Activated T-helper 1 cell treated with anti-CD3 and anti-CD28 coated beads, Interleukin-12 subunit alpha, Interleukin-12 subunit beta, Interleukin-2, Interleukin-4 antibody, amounts not matched to agents 30 ng/mL and 10 ng/mL and 1 ng/mL, durations not matched to agents 14 hours and 24 hours and 36 hours (primary cell): ENCODE measurements at regions of chr1 and their contacts with region 1.

Region 1: DNA sequence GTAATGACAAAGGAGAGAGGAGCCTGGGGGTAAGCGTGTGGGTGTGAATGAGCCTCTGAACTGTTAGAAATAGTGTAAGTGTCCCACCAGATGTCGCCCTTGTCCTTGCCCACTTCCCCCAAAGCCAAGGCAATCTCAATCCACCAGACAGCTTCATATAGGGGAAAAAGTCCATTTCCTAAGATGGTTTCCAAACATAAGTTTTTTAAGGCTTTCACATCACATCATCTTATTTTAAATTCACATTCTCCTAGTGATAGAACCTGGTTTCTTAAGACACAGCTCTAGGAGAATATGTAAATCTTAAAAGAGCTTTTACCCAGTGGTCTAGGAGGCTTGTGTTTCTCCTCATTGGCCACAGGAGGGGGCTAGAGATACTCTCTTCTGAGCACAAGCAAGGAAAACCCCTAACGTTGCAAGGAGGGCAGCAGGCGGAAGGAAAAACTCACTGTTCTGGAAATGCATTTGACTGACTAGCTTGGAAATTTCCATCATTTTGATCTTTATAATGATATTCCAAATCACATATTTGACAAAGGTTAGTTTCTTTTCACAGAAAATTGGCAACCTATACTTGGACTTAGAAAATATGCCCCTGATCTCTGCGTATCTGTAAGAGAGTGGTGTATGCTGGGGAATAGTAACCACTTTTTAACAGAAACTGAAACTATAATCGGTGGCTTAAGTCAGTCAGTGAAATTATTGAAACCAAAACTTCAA is 51.9 kb upstream of the LPAR3 start:
- DNase-seq: peak; percentile 77
- H3K4me3 Mint-ChIP-seq: peak overlapping the region; percentile 81
- H3K27ac Mint-ChIP-seq: peak overlapping the region; percentile 91
- H3K4me1 Mint-ChIP-seq: peaks cover 39% of the 10 kb centered on the region
- H3K27me3 Mint-ChIP-seq: no peaks in the 10 kb centered on the region

Region 2: DNA sequence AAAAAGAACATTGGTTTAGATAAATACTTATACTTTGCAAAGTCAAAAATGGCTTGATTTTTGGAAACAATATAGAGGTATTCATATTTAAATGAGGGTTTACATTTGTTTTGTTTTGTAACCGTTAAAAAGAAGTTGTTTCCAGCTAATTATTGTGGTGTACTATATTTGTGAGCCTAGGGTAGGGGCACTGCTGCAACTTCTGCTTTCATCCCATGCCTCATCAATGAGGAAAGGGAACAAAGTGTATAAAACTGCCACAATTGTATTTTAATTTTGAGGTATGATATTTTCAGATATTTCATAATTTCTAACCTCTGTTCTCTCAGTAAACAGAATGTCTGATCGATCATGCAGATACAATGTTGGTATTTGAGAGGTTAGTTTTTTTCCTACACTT is 708.7 kb before region 1 on chr1:
- intact Hi-C with region 1: no loop called
- DNase-seq: no peak
- H3K4me3 Mint-ChIP-seq: no peak overlapping the region
- H3K27ac Mint-ChIP-seq: no peak overlapping the region
- H3K4me1 Mint-ChIP-seq: no peaks in the 10 kb centered on the region
- H3K27me3 Mint-ChIP-seq: no peaks in the 10 kb centered on the region

Region 3: DNA sequence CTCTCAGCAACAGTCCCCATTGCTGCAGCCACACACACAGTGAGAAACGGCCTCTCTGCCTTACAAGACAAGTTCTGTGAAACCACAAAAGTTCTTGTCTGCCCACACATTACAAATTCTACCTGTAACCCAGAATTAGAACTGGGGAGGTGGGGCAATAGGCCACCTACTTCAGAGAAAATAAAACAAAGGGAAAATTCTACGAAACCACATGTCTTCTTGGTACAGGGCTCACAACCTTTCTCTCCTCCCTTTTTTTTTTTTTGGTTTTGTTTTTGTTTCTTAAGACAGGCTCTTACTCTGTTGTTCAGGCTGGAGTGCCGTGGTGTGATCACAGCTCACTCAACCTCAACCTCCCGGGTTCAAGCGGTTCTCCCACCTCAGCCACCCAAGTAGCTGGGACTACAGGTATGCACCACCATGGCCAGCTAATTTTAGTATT is 82.1 kb before region 1 on chr1:
- intact Hi-C with region 1: loop called (anchors 5 kb)
- DNase-seq: peak; percentile 66
- H3K4me3 Mint-ChIP-seq: peak overlapping the region; percentile 77
- H3K27ac Mint-ChIP-seq: peak overlapping the region; percentile 82
- H3K4me1 Mint-ChIP-seq: peaks cover 53% of the 10 kb centered on the region
- H3K27me3 Mint-ChIP-seq: peaks cover 1% of the 10 kb centered on the region

Region 4: DNA sequence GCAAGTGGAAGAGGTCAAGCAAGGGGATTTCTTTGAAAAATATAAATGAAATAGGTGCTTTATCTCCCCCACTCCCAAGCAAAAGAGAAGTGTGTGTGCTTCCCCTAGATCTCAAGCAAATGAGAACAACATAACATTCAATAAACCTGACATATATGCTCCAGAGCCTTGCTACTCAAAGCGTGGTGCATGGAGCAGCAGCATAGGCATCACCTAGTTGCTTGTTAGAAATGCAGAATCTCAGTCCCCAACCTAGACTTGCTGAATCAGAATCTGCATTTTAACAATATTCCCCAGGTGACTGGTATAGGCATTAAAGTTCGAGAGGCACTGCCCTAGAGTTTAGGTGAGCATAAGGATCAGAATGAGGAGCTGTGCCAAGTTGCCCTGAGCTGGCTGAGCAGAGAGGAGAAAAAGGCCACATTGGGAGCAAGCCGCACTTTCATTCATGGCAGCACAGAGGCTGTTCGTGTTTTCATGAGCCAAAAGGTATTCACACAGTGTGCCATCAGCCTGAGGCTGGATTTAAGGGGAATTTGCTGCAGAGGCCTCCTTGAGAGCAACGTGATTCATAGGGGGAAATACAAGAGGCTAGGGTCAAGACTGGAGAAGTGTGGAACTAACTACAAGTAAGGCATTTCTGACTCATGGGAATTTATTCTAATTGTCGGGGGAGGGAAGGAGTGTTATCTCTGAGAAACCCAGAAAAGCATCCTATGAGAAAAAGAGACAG is 37.7 kb before region 1 on chr1:
- intact Hi-C with region 1: no loop called
- DNase-seq: no peak
- H3K4me3 Mint-ChIP-seq: no peak overlapping the region
- H3K27ac Mint-ChIP-seq: no peak overlapping the region
- H3K4me1 Mint-ChIP-seq: no peaks in the 10 kb centered on the region
- H3K27me3 Mint-ChIP-seq: peaks cover 22% of the 10 kb centered on the region

Region 5: GRCh38 chr1:84996846-84997666 is 52.1 kb after region 1 on chr1 and contains the start of gene MCOLN2:
- intact Hi-C with region 1: loop called (anchors 1 kb)
- DNase-seq: peak; percentile 52
- H3K4me3 Mint-ChIP-seq: peak within 1 kb of the TSS; percentile 88
- H3K27ac Mint-ChIP-seq: peak within 1 kb of the TSS; percentile 88
- H3K4me1 Mint-ChIP-seq: peaks cover 55% of the 10 kb centered on the region
- H3K27me3 Mint-ChIP-seq: peaks cover 12% of the 10 kb centered on the region
- total RNA-seq, gene MCOLN2: 117 and 119 TPM in 2 replicates

Region 6: DNA sequence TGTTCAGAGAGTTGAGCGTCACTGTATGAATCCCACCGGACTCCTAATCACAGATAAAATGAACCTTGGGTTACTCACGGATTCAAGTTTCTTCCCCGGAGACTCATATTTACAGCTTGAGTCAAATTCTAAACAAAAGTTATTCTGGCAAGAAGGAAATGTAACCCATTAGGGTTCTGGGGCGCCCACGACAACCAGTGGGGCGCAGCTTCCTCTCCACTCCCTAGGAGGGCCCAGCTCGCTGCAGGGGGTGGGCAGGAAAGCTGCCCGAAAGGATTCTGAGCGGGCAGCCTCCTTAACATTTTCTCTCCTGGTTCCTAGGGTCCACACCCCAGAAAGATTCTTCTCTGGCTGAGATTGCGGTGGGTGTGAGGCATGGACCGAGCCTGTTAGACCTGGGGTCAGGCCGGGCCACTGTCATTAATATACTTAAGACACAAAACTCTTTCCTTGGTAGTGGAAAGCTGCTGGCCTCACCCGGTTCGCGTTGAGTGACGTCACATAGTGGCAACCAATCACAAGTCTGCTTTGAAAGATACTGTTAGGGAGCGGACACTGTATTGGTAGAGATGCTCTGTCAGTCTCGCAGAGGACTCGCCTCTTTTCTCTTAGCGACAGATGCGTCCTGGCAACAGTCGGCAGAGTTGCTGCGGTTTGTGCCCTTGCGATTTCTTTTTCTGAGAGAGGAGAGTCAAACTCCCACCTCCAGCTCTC is 116.9 kb after region 1 on chr1:
- intact Hi-C with region 1: loop called (anchors 1 kb)
- DNase-seq: peak; percentile 87
- H3K4me3 Mint-ChIP-seq: peak overlapping the region; percentile 85
- H3K27ac Mint-ChIP-seq: peak overlapping the region; percentile 62
- H3K4me1 Mint-ChIP-seq: peaks cover 15% of the 10 kb centered on the region
- H3K27me3 Mint-ChIP-seq: peaks cover 16% of the 10 kb centered on the region

Region 7: GRCh38 chr1:85200870-85201339 is 256.0 kb after region 1 on chr1 and contains the start of gene SYDE2:
- intact Hi-C with region 1: loop called (anchors 2 kb)
- DNase-seq: peak; percentile 67
- H3K4me3 Mint-ChIP-seq: peak within 1 kb of the TSS; percentile 94
- H3K27ac Mint-ChIP-seq: peak within 1 kb of the TSS; percentile 88
- H3K4me1 Mint-ChIP-seq: peaks cover 18% of the 10 kb centered on the region
- H3K27me3 Mint-ChIP-seq: peaks cover 40% of the 10 kb centered on the region
- total RNA-seq, gene SYDE2: 0.76 and 0.83 TPM in 2 replicates

Region 8: DNA sequence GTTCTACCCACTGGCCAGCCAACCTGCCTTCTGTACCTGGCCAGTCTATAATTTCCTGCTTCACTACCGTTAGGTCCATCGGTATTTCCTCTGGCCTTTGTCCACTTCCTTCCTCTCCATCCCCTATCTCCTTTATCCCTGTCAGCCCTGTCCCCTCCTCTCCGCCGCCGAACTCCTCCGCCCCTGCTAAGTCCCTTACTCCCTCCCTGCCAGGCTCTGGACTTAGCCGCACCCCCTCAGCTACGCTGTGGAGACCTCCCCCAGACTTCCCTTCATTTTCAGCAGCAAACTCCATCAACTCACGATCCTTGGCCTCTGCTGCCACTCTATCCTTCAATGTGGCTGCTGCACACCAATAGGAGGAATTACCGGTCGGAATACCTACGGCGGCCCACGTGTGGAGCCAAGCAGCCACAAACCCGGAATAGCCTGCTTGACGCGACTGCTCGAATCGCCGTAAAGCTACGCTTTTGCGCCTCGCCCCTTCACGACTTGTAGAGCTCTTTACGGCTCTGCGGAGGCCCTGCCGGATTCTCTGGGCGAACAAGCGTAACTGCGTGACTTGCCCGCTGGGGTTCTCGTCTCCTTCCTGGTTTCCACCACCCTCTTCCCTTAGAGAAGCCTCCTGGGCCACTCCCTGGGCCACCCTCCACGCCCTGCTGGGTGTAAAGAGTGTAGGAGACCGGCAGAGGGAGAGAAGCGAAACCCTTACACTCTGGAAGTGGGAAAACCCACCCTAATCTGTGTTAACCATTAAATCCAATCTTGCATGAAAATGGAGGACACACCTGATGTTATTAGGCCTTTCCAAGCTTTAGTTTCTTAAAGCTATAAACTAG is 763.3 kb after region 1 on chr1 and contains the start of gene ZNHIT6:
- intact Hi-C with region 1: loop called (anchors 2 kb)
- DNase-seq: peak; percentile 82
- H3K4me3 Mint-ChIP-seq: no peak within 1 kb of the TSS
- H3K27ac Mint-ChIP-seq: no peak within 1 kb of the TSS
- H3K4me1 Mint-ChIP-seq: peaks cover 11% of the 10 kb centered on the region
- H3K27me3 Mint-ChIP-seq: no peaks in the 10 kb centered on the region
- total RNA-seq, gene ZNHIT6: 24.6 and 26.3 TPM in 2 replicates